Adrenal gland (tissue), 19 donors: ENCODE measurements at regions of chr22 and their contacts with region 1.

Region 1: GRCh38 chr22:34105461-34106062 is 185.3 kb upstream of the LARGE1 start:
- DNase-seq: peak; percentile 45 to 82 (median 71)
- H3K4me3 ChIP-seq: no peak overlapping the region
- H3K27ac ChIP-seq: no peak overlapping the region
- H3K4me1 ChIP-seq: no peaks in the 10 kb centered on the region
- H3K27me3 ChIP-seq: peaks cover 10% of the 10 kb centered on the region
- CTCF ChIP-seq: peak; percentile 52 to 72 (median 70)
- POLR2A ChIP-seq: no peak

Region 2: DNA sequence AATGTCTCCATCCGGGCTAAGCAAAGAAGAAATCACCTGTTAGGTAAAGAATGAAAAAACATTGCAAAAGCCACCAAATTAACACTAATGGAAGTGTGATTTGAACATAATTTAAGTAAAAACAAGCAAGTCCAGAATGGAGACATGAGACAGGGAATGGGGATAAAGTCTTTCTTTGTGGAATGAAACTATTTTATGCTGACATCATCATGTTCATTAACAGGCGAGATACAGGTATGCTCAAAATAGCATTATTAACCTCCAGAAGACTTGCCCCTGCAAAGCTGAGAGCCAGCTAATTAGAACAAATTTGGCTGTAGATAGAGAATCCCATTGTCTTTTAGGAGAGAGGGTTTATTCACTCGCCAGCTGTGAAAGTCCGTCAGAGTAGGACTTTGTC is 180.4 kb before region 1 on chr22:
- intact Hi-C with region 1: loop called (anchors 5 kb)
- DNase-seq: no peak
- H3K4me3 ChIP-seq: no peak overlapping the region
- H3K27ac ChIP-seq: no peak overlapping the region
- H3K4me1 ChIP-seq: peaks cover 10 to 17% of the 10 kb centered on the region in 2 donors
- H3K27me3 ChIP-seq: no peaks in the 10 kb centered on the region
- CTCF ChIP-seq: no peak
- POLR2A ChIP-seq: no peak

Region 3: DNA sequence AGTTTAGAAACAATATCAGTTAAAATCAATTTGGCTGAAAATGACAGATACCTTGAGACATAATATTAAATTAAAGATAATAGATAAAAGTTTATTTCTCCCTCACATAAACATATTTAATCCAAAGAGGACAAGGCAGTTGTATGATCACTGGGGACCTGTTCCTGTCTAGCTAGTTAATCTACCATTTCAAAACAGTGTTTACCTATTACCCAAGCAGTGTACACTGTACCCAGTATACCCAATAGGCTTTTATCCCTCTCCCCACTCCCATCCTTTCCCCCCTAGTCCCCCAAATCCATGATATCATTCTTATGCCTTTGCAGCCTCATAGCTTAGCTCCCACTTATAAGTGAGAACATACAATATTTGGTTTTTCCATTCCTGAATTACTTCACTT is 44.5 kb after region 1 on chr22:
- intact Hi-C with region 1: no loop called
- DNase-seq: no peak
- H3K4me3 ChIP-seq: no peak overlapping the region
- H3K27ac ChIP-seq: no peak overlapping the region
- H3K4me1 ChIP-seq: no peaks in the 10 kb centered on the region
- H3K27me3 ChIP-seq: no peaks in the 10 kb centered on the region
- CTCF ChIP-seq: no peak
- POLR2A ChIP-seq: no peak